Activated CD4-positive, alpha-beta T cell treated with anti-CD3 and anti-CD28 coated beads for 36 hours (primary cell): ENCODE measurements at regions of chr13 and their contacts with region 1.

Region 1: GRCh38 chr13:32586080-32586900 is at the start of gene PDS5B:
- DNase-seq: peak; percentile 96
- ATAC-seq: peak; percentile 93
- H3K4me3 Mint-ChIP-seq: peak within 1 kb of the TSS; percentile 92
- H3K27ac Mint-ChIP-seq: peak within 1 kb of the TSS; percentile 93
- H3K4me1 Mint-ChIP-seq: peaks cover 36% of the 10 kb centered on the region
- H3K27me3 Mint-ChIP-seq: peaks cover 3% of the 10 kb centered on the region
- total RNA-seq, gene PDS5B: 51.3 to 75.7 TPM

Region 2: GRCh38 chr13:32045982-32046785 is 540.1 kb before region 1 on chr13:
- CTCF ChIA-PET with region 1: no interaction called
- POLR2A ChIA-PET with region 1: no interaction called
- intact Hi-C with region 1: no loop called
- DNase-seq: peak; percentile 20
- ATAC-seq: peak; percentile 74
- H3K4me3 Mint-ChIP-seq: peak overlapping the region; percentile 39
- H3K27ac Mint-ChIP-seq: peak overlapping the region; percentile 84
- H3K4me1 Mint-ChIP-seq: peaks cover 58% of the 10 kb centered on the region
- H3K27me3 Mint-ChIP-seq: no peaks in the 10 kb centered on the region

Region 3: DNA sequence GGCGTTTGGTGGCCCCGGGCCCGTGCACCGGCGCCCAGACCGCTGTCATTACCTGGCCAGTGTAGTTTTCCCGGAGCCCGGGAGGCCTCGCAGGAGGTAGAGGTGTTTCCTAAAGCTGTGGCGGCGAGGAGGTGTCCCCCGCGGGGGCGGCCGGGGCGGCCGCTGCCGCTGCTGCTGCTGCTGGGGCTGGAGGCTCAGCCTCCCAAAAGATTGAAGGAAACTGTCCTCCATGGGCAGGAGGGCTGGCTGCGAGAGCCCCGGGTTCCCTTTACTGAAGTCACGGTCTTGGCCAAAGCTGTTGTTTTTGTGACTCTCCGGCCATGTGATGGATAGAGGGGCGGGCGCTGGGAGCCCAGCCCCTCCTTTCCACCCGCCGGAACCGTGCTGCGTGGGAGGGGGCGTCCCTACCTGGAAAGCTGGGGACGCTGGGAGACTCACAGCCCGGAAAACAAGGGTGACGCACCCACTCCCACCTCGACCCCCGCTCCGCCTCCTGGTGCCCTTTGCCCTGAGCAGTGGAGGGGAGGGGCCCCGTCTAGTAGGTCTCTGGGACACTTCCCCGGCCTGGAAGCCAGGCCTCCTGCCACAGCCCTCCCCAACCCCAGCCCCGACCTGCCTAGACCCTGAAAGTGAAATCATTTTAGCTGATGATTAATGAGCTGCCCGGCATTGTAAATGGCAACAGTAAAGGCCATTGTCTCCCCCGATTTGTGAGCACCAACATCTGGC is 158.3 kb before region 1 on chr13 and contains the start of gene N4BP2L1:
- CTCF ChIA-PET with region 1: interaction called, 4 read pairs
- POLR2A ChIA-PET with region 1: interaction called, 5 read pairs
- intact Hi-C with region 1: loop called in 1 of 2 experiments (anchors 1 kb)
- DNase-seq: peak; percentile 94
- ATAC-seq: peak; percentile 77
- H3K4me3 Mint-ChIP-seq: peak within 1 kb of the TSS; percentile 86
- H3K27ac Mint-ChIP-seq: peak within 1 kb of the TSS; percentile 94
- H3K4me1 Mint-ChIP-seq: peaks cover 31% of the 10 kb centered on the region
- H3K27me3 Mint-ChIP-seq: no peaks in the 10 kb centered on the region
- total RNA-seq, gene N4BP2L1: 16.1 to 16.5 TPM

Region 4: GRCh38 chr13:32650705-32651311 is 64.5 kb after region 1 on chr13:
- CTCF ChIA-PET with region 1: interaction called, 63 read pairs
- POLR2A ChIA-PET with region 1: interaction called, 6 read pairs
- intact Hi-C with region 1: loop called (anchors 1 kb)
- DNase-seq: peak; percentile 80
- ATAC-seq: peak; percentile 90
- H3K4me3 Mint-ChIP-seq: no peak overlapping the region
- H3K27ac Mint-ChIP-seq: peak overlapping the region; percentile 72
- H3K4me1 Mint-ChIP-seq: peaks cover 47% of the 10 kb centered on the region
- H3K27me3 Mint-ChIP-seq: no peaks in the 10 kb centered on the region

Region 5: GRCh38 chr13:32783067-32783466 is 196.8 kb after region 1 on chr13:
- CTCF ChIA-PET with region 1: interaction called, 4 read pairs
- POLR2A ChIA-PET with region 1: no interaction called
- intact Hi-C with region 1: loop called in 1 of 2 experiments (anchors 5 kb)
- DNase-seq: peak; percentile 36
- ATAC-seq: peak; percentile 97
- H3K4me3 Mint-ChIP-seq: no peak overlapping the region
- H3K27ac Mint-ChIP-seq: no peak overlapping the region
- H3K4me1 Mint-ChIP-seq: peaks cover 17% of the 10 kb centered on the region
- H3K27me3 Mint-ChIP-seq: no peaks in the 10 kb centered on the region

Region 6: DNA sequence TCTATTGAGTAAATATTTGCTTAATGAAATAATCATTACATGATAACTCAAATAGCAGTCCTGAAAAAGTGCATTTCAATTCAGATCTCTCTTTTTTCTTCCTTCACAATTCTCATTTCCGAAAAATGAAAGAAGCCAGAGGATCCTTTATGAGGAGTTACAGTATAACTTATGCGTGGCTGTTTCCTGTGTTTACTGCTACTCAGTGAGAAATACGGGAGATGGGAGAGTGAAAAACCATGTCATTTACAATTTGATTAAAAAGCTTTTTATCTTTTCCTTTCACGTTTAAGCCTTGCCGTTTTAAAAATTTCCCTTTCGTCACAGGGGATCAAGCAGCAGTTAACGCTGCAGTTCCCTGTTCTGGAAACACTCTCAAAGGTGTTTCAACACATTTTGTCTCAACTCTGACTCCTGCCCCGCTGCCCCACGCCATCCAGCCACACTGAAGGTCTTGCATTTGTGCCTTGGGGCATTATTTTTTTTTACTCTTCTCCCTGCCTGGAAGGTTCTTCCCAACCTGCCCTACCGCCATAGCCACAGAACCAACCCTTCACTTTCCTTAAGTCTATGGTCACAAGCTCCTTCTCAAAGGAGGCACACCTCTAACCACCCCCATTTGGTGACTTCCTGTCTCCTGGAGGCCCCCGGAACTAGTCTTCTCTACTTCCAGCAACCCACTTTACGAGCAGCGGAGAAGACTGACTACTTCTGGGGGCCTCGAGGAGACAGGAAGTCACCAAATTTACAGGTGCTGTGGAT is 446.9 kb after region 1 on chr13:
- CTCF ChIA-PET with region 1: no interaction called
- POLR2A ChIA-PET with region 1: no interaction called
- intact Hi-C with region 1: loop called in 1 of 2 experiments (anchors 5 kb)
- DNase-seq: peak; percentile 42
- ATAC-seq: peak; percentile 85
- H3K4me3 Mint-ChIP-seq: peak overlapping the region; percentile 63
- H3K27ac Mint-ChIP-seq: peak overlapping the region; percentile 97
- H3K4me1 Mint-ChIP-seq: peaks cover 10% of the 10 kb centered on the region
- H3K27me3 Mint-ChIP-seq: peaks cover 6% of the 10 kb centered on the region

Region 7: DNA sequence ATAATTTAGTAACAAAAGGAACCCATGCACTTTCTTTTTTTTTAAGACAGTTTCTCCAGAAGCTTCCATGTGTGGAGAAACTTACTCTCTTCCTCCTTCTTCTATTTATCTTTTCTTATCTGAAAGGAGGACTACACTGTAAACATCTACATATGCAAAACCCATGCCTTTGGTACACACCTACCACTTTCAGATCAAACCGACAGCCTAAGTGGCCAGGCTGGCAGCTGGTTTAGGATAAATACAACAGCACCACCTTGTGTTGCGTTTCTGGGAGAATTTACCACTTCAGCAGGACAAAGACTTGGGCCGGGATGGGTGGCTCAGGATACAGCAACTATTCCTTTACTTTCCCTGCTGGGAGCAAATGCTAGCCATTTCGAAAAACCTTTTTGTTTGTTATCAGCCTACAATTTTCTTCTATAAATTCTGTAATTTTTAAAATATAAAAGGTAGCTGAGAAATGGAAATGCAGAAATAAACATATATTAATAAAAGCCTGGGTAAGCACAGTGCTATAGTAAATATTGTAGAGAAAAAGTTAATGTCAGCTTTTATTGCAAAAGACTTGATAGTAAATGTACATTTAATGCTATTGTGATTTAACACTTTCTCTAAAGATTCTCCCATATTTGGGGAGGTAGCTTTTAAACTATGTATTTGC is 1137.6 kb after region 1 on chr13:
- CTCF ChIA-PET with region 1: interaction called, 7 read pairs
- POLR2A ChIA-PET with region 1: no interaction called
- intact Hi-C with region 1: loop called in 1 of 2 experiments (anchors 2 kb)
- DNase-seq: peak; percentile 81
- ATAC-seq: peak; percentile 90
- H3K4me3 Mint-ChIP-seq: no peak overlapping the region
- H3K27ac Mint-ChIP-seq: peak overlapping the region; percentile 87
- H3K4me1 Mint-ChIP-seq: peaks cover 30% of the 10 kb centered on the region
- H3K27me3 Mint-ChIP-seq: no peaks in the 10 kb centered on the region